CD4-positive, alpha-beta memory T cell (primary cell): ENCODE measurements at regions of chr6 and their contacts with region 1.

Region 1: DNA sequence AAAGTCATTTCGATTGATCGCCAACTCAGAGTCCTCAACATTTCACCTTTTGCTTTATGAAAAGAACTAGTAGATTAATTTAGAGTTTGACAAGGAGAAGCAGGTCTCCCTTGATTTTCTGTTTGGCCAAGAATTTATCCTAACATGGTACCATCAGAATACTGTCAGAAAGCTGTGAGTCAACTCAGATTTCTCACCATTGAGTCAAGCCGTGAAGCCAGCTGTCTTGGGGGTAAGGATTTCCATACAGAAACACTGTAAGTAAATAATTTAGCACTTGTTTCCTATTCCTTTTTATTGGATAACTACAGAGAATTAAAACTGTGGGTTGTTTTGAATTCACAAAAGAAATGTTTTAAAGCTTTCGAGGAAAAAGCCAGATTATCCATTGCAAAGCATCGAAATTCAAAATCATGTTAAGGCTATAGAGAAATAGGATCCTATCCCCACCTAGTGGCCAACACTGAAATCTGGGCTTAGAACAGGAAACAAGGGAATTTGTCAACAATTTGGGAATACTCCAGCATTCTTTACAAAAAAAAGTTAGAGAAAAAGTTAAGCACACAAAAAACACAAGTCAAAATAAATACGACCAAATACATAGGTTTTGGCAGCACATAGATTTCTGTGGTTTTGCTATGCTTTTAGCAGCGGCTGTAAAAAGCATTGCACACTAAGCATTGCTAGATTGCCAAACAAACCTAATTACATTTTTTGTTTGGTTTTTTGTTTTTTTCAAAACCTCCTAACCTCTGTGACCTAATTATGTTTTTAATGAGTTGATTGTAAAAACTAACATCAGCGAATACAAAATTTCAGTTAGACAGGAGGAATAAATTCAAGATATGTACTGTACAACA is 44.2 kb downstream of the COL11A2 start:
- DNase-seq: peak in 2 of 5 donors; percentile 11 to 29
- H3K4me3 ChIP-seq: no peak overlapping the region
- H3K4me3 Mint-ChIP-seq: no peak overlapping the region
- H3K27ac ChIP-seq: no peak overlapping the region
- H3K27ac Mint-ChIP-seq: no peak overlapping the region
- H3K4me1 ChIP-seq: no peaks in the 10 kb centered on the region
- H3K4me1 Mint-ChIP-seq: peaks cover 0 to 2% (median 0%) of the 10 kb centered on the region in 4 donors
- H3K27me3 ChIP-seq: no peaks in the 10 kb centered on the region
- H3K27me3 Mint-ChIP-seq: peaks cover 21 to 26% of the 10 kb centered on the region in 2 donors

Region 2: GRCh38 chr6:33118525-33119123 is 29.4 kb before region 1 on chr6:
- CTCF ChIA-PET with region 1: interaction called, 39 read pairs
- POLR2A ChIA-PET with region 1: no interaction called
- intact Hi-C with region 1: no loop called
- DNase-seq: peak in 4 of 5 donors; percentile 65 to 72 (median 69)
- H3K4me3 ChIP-seq: no peak overlapping the region
- H3K4me3 Mint-ChIP-seq: no peak overlapping the region
- H3K27ac ChIP-seq: no peak overlapping the region
- H3K27ac Mint-ChIP-seq: peak overlapping the region in 1 of 7 donors; percentile 26
- H3K4me1 ChIP-seq: no peaks in the 10 kb centered on the region
- H3K4me1 Mint-ChIP-seq: peaks cover 0 to 13% (median 5%) of the 10 kb centered on the region in 4 donors
- H3K27me3 ChIP-seq: peaks cover 13% of the 10 kb centered on the region
- H3K27me3 Mint-ChIP-seq: peaks cover 42 to 50% of the 10 kb centered on the region in 2 donors

Region 3: GRCh38 chr6:33161354-33162331 is 13.6 kb after region 1 on chr6:
- CTCF ChIA-PET with region 1: interaction called, 16 read pairs
- POLR2A ChIA-PET with region 1: no interaction called
- intact Hi-C with region 1: no loop called
- DNase-seq: peak; percentile 75 to 84 (median 77)
- H3K4me3 ChIP-seq: peak overlapping the region; percentile 23 to 54
- H3K4me3 Mint-ChIP-seq: peak overlapping the region; percentile 83 to 92 (median 89)
- H3K27ac ChIP-seq: no peak overlapping the region
- H3K27ac Mint-ChIP-seq: peak overlapping the region in 6 of 7 donors; percentile 45 to 91 (median 86)
- H3K4me1 ChIP-seq: peaks cover 5% of the 10 kb centered on the region
- H3K4me1 Mint-ChIP-seq: peaks cover 1 to 11% (median 8%) of the 10 kb centered on the region in 4 donors
- H3K27me3 ChIP-seq: no peaks in the 10 kb centered on the region
- H3K27me3 Mint-ChIP-seq: peaks cover 2 to 8% of the 10 kb centered on the region in 2 donors